SK-N-SH (cell line): ENCODE measurements at regions of chr1 and their contacts with region 1.

Region 1: DNA sequence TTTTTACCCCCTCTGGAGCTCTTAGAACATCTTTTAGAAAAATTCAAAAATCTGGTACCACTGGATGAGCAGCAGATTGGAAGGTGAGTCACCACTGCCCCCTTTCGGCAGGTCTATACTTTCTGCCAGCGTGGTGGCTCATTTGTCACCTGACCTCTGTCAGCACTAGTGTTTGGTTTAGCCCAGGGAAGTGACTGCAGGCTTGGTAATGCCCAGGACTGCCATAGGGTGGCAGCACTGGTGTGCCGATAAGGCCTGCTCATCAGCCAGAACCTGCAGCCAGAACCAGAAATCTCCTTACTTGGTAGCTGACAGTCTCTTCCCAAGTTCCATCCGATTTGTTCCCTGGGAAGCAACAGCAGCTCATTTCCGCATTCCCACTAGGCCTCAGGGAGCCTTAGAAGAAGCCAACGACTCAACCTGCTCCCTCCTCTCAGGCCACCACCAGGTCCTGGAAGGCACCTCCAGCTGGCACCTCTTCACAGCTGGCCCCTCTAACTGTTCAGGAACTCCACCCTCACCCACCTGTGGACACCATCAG is 6.8 kb downstream of the SMIM12 start:
- DNase-seq: peak; percentile 91
- H3K4me3 ChIP-seq: peak overlapping the region in 1 of 2 experiments; percentile 6; a peak in 1 of 4 replicates
- H3K27ac ChIP-seq: peak overlapping the region in 1 of 2 experiments; percentile 14; a peak in 2 of 4 replicates
- H3K4me1 ChIP-seq: peaks cover 0 to 17% of the 10 kb centered on the region in 2 experiments; a peak in 1 of 4 replicates
- H3K27me3 ChIP-seq: no peaks in the 10 kb centered on the region
- CTCF ChIP-seq: peak; percentile 99
- EP300 ChIP-seq: 0 out of 4 replicates have a peak, but pooled peaks of 1 of the 2 experiments have one; percentile 6
- RAD21 ChIP-seq: peak; percentile 89

Region 2: GRCh38 chr1:34786521-34787325 is 66.0 kb before region 1 on chr1:
- CTCF ChIA-PET with region 1: interaction called, 170 read pairs
- POLR2A ChIA-PET with region 1: interaction called, 5 read pairs
- DNase-seq: peak; percentile 86
- H3K4me3 ChIP-seq: no peak overlapping the region
- H3K27ac ChIP-seq: no peak overlapping the region
- H3K4me1 ChIP-seq: peaks cover 0 to 2% of the 10 kb centered on the region in 2 experiments; a peak in 1 of 4 replicates
- H3K27me3 ChIP-seq: peaks cover 10% of the 10 kb centered on the region
- CTCF ChIP-seq: peak; percentile 80
- EP300 ChIP-seq: no peak
- RAD21 ChIP-seq: peak; percentile 95

Region 3: DNA sequence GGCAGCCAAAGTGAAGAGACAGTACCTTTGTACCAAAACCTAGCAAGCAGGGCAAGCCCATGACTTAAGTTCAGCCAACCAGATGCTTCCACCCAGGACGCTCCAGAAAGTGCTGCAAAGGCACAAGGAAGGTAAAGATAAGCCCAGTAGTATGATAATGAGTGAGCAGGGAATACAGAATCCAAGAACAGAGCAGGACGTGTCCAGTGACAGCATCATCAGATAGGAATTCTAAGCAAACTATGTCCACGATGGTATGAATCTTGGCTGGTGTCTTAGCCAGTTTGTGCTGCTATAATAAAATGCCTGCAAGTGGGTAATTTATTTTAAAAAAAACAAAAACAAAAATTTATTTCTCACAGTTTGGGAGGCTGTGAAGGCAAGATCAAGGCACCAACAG is 46.4 kb before region 1 on chr1:
- CTCF ChIA-PET with region 1: interaction called, 31 read pairs
- POLR2A ChIA-PET with region 1: no interaction called
- DNase-seq: no peak
- H3K4me3 ChIP-seq: no peak overlapping the region
- H3K27ac ChIP-seq: no peak overlapping the region
- H3K4me1 ChIP-seq: peaks cover 0 to 9% of the 10 kb centered on the region in 2 experiments; a peak in 1 of 4 replicates
- H3K27me3 ChIP-seq: no peaks in the 10 kb centered on the region
- CTCF ChIP-seq: no peak
- EP300 ChIP-seq: no peak
- RAD21 ChIP-seq: no peak

Region 4: DNA sequence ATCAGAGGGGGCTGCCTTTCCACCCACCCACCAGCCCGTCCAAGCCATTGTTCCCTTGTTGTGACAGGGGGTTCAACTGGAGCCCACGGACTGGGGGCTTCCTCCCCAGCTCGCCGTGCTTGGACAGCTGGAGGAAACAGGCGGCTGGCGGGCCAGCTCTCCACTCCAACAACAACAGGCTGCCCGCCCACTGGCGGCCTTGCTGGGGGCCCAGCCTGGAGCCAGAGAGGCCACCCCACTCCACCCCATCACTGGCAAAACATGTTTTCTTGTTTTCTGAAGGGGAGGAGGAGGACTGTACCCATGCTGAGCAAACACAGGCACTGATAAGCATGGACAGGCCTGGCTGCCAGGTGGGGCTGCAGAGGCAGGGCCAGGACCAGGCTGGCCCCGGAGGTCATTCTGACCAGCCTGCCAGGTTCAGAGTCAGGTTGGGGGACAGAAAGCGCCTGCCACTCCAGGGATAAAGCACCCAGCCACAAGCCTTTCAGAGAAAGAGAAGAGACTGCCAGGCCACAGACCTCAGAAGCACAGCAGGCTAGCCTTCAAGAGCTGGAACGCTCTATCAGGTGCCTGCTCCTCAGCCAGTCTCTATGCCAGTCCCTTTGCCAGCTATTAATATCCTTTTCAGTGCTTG is 27.2 kb before region 1 on chr1:
- CTCF ChIA-PET with region 1: interaction called, 52 read pairs
- POLR2A ChIA-PET with region 1: interaction called, 3 read pairs
- DNase-seq: peak; percentile 86
- H3K4me3 ChIP-seq: no peak overlapping the region; a peak in 1 of 4 replicates
- H3K27ac ChIP-seq: peak overlapping the region in 1 of 2 experiments; percentile 95; a peak in 2 of 4 replicates
- H3K4me1 ChIP-seq: peaks cover 0 to 33% of the 10 kb centered on the region in 2 experiments; a peak in 2 of 4 replicates
- H3K27me3 ChIP-seq: no peaks in the 10 kb centered on the region
- CTCF ChIP-seq: no peak
- EP300 ChIP-seq: peak in 1 of 2 experiments; percentile 84; a peak in 2 of 4 replicates
- RAD21 ChIP-seq: peak; percentile 3; the same call in 1 of the 2 replicates

Region 5: DNA sequence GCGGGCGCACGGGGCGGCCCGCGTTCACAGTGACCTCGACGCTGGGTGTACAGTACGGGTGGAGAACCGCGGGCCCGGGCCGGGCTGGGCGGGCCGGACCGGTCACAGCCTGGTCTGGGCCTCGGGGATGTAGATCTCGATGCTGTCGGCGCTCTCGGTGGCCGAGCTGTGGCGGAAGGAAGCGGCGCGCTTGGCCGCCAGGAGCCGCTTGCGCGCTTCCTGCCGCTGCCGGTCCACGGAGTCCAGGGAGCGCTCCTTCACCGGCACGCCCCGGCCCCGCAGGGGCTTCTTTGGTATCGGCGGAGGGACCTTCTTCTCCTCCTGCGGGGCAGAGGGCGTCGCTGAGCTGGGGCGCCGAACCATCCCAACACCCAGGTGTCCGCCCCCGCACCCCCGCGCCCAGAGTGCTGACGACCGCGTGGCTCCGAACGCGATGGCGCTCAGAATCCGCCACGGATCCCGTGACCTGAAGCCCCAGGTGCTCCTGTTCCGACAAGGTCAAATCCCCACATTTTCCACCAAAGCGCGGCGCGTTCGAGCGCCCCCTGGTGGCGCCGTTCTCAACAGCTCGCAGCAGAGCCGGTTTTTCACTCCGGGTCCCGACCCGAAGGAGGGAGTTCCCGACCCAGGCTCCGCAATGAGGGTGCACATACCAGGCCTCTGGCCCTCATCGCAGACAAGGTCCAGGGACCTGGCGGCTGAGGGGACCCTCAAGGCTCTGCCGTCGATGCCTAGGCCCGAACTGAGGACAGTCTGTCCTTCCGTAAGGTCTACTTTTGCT is 13.4 kb after region 1 on chr1:
- CTCF ChIA-PET with region 1: interaction called, 54 read pairs
- POLR2A ChIA-PET with region 1: no interaction called
- DNase-seq: peak; percentile 87
- H3K4me3 ChIP-seq: peak overlapping the region; percentile 14 to 54; a peak in 3 of 4 replicates
- H3K27ac ChIP-seq: no peak overlapping the region
- H3K4me1 ChIP-seq: peaks cover 0 to 3% of the 10 kb centered on the region in 2 experiments; a peak in 1 of 4 replicates
- H3K27me3 ChIP-seq: no peaks in the 10 kb centered on the region
- CTCF ChIP-seq: peak; percentile 84
- EP300 ChIP-seq: no peak
- RAD21 ChIP-seq: peak; percentile 43

Region 6: DNA sequence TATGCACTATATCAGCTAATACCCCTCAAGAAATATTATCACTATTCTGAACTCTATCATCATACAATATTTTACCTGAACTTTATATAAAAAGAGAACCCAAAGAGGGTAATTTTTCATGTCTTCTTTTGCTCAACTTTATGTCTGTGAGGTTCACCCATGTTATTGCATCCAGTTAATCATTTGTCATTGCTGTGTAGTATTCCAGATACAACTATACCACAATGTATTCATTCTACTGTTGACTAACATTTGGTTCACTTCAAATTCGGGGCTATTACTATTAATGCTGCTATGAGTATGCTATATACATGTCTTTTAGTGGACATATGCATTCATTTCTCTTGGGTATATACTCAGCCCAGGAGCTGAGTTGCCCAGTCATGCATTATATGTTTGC is 97.7 kb after region 1 on chr1:
- CTCF ChIA-PET with region 1: no interaction called
- POLR2A ChIA-PET with region 1: no interaction called
- DNase-seq: no peak
- H3K4me3 ChIP-seq: no peak overlapping the region
- H3K27ac ChIP-seq: no peak overlapping the region
- H3K4me1 ChIP-seq: no peaks in the 10 kb centered on the region
- H3K27me3 ChIP-seq: no peaks in the 10 kb centered on the region; the same call in 1 of the 2 replicates
- CTCF ChIP-seq: no peak
- EP300 ChIP-seq: no peak
- RAD21 ChIP-seq: no peak

Region 7: GRCh38 chr1:34984793-34985608 is 132.3 kb after region 1 on chr1 and contains the start of gene TMEM35B:
- CTCF ChIA-PET with region 1: interaction called, 16 read pairs
- POLR2A ChIA-PET with region 1: no interaction called
- DNase-seq: peak; percentile 87
- H3K4me3 ChIP-seq: peak within 1 kb of the TSS; percentile 83 to 93
- H3K27ac ChIP-seq: peak within 1 kb of the TSS; percentile 81 to 82
- H3K4me1 ChIP-seq: peaks cover 13% of the 10 kb centered on the region in 2 experiments; a peak in 2 of 4 replicates
- H3K27me3 ChIP-seq: no peaks in the 10 kb centered on the region
- CTCF ChIP-seq: peak; percentile 20
- EP300 ChIP-seq: no peak; a peak in 1 of 4 replicates
- RAD21 ChIP-seq: no peak
- polyA plus RNA-seq, gene TMEM35B: 47.4 and 61.7 TPM in 2 replicates